ENCODE measurements at regions of chr3 and their contacts with region 1.

Region 1: GRCh38 chr3:190224863-190225692 is 97.2 kb downstream of the CLDN1 start:
- DNase-seq: no peak
- H3K4me3 ChIP-seq: no peak overlapping the region
- H3K27ac ChIP-seq: no peak overlapping the region
- H3K4me1 ChIP-seq: no peaks in the 10 kb centered on the region
- H3K27me3 ChIP-seq: no peaks in the 10 kb centered on the region
- CTCF ChIP-seq: peak; percentile 28

Region 2: DNA sequence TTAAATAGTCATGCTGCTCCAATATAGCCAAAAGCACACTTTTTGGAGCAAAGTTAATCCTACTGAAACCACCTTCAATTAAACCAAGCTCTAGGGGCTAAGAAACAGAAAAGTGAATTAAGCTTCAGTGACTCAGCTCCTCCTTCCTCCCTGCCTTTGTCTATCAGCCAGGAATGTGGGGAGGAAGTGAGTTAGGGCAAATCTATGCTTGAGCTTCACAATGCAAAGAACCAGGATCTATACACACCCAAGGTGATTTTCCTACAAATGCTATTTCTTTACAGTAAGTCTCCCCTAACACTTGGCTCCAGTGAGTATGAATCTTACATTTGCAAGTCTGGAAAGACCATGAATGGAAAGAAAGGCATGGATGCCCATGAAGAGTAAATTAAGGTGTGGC is 316.4 kb before region 1 on chr3:
- intact Hi-C with region 1: no loop called
- DNase-seq: no peak
- H3K4me3 ChIP-seq: no peak overlapping the region
- H3K27ac ChIP-seq: no peak overlapping the region
- H3K4me1 ChIP-seq: no peaks in the 10 kb centered on the region
- H3K27me3 ChIP-seq: no peaks in the 10 kb centered on the region
- CTCF ChIP-seq: no peak

Region 3: DNA sequence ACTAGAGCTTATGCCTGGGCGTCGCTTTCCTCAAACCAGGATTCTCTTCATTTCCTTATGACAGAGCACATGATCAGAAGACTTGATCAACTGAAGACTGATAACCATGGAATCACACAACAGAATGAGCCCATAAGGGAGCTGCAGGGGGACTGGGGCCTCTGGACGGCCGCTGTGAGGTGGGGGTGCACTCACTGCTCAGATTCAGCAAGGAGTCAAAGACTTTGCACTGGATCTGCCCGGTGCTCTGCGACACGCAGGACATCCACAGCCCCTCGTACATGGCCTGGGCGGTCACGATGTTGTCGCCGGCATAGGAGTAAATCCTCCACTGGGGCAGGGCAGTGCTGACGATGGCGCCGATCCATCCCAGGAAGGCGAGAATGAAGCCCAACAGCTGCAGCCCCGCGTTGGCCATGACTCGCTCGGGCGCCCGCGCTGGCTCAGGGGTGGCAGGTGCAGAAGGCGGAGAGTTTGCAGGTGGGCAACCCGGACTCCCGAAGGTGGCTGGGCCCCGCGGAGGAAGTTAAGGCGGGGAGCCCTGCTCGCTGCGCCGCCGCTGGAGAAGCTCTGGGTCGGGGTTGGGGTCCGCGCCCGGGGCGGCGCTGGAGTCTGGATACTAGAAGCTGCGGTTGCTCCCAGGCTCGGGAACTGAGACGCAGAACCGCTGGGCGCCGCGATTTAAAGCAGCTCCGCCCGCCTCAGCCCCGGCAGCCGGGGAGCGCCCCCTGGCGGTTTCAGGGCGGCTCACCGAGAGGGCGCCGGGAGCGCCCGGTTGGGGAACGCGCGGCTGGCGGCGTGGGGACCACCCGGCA is 96.9 kb after region 1 on chr3 and contains the start of gene CLDN1:
- intact Hi-C with region 1: loop called (anchors 2 kb)
- DNase-seq: peak; percentile 84
- H3K4me3 ChIP-seq: peak within 1 kb of the TSS; percentile 52
- H3K27ac ChIP-seq: no peak within 1 kb of the TSS
- H3K4me1 ChIP-seq: no peaks in the 10 kb centered on the region
- H3K27me3 ChIP-seq: no peaks in the 10 kb centered on the region
- CTCF ChIP-seq: peak; percentile 92
- total RNA-seq, gene CLDN1: 2.2 to 2.4 TPM

Region 4: GRCh38 chr3:190384241-190384863 is 159.3 kb after region 1 on chr3:
- intact Hi-C with region 1: loop called (anchors 10 kb)
- DNase-seq: peak; percentile 38
- H3K4me3 ChIP-seq: no peak overlapping the region
- H3K27ac ChIP-seq: no peak overlapping the region
- H3K4me1 ChIP-seq: no peaks in the 10 kb centered on the region
- H3K27me3 ChIP-seq: no peaks in the 10 kb centered on the region
- CTCF ChIP-seq: peak; percentile 50

Region 5: DNA sequence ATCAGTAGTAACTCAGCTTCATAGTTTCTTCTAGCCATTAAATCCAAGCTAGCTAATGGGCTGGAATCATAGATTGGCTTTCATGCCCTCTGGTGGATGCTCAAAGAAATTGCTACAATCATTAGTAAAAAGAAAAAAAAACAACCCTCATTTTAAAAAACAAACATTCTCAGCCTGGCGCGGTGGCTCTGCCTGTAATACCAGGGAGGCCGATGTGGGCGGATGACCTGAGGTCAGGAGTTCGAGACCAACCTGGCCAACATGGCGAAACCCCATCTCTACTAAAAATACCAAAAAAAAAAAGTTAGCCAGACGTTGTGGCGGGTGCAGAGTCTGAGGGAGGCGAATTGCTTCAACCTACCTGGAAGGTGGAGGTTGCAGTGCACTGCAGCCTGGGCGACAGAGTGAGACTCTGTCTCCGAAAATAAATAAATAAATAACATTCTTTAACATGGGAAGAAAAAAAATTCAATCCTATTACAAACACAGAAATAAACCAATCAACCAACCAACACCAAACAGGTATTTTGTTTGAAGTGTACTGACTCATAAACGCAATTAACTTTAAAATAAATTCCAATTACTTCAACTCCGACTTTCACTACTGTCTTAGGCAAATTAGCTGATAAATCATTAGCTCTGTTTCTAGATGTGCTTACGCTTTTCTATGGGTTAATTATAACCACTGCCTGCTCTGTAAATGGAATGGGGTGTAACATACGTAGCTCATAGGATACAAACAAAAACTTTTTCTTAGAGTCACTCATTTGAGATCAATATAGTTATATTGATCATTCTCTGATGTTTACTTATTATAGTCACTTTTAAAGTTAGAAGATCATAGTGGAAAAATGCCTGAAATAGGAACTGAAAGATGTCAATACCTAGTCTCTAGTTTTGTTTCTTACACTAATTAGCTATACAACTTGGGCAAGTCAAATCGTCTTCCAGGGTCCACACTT is 199.7 kb after region 1 on chr3:
- intact Hi-C with region 1: loop called (anchors 10 kb)
- DNase-seq: peak; percentile 41
- H3K4me3 ChIP-seq: no peak overlapping the region
- H3K27ac ChIP-seq: no peak overlapping the region
- H3K4me1 ChIP-seq: no peaks in the 10 kb centered on the region
- H3K27me3 ChIP-seq: no peaks in the 10 kb centered on the region
- CTCF ChIP-seq: peak; percentile 52

Region 6: DNA sequence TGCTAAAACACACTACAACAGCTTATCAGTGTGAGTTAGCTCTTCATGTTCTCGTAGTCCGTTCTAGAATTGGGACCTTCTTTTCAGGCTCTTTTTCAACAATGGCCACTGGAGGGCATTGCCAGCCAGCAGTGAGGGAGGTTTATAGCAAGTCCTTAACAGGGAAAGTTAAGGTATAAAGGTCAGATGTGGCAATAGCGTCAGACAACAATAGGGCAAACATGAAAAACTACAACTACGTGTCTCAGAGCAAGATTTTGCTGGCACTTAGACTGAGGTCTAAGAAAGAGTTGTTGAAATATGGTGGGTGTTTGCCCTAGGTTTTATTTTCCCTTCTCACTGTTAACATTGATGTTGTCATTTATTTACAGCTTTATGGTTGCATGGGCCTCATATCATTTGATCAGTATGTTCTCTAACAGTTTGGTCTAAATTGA is 476.0 kb after region 1 on chr3:
- intact Hi-C with region 1: loop called (anchors 10 kb)
- DNase-seq: peak; percentile 61
- H3K4me3 ChIP-seq: no peak overlapping the region
- H3K27ac ChIP-seq: no peak overlapping the region
- H3K4me1 ChIP-seq: no peaks in the 10 kb centered on the region
- H3K27me3 ChIP-seq: no peaks in the 10 kb centered on the region
- CTCF ChIP-seq: peak; percentile 21